ENCODE measurements at regions of chr11 and their contacts with region 1.

Region 1: GRCh38 chr11:61967116-61967923 is at the start of gene FTH1:
- DNase-seq: peak; percentile 94 to 97 (median 94)
- H3K4me3 ChIP-seq: peak within 1 kb of the TSS; percentile 75 to 100 (median 100)
- H3K4me3 Mint-ChIP-seq: peak within 1 kb of the TSS; percentile 95 to 97
- H3K27ac ChIP-seq: peak within 1 kb of the TSS; percentile 95 to 99
- H3K27ac Mint-ChIP-seq: peak within 1 kb of the TSS; percentile 98 to 100 (median 99)
- H3K4me1 ChIP-seq: peaks cover 71 to 72% of the 10 kb centered on the region in 2 donors
- H3K4me1 Mint-ChIP-seq: peaks cover 60% of the 10 kb centered on the region
- H3K27me3 ChIP-seq: no peaks in the 10 kb centered on the region
- H3K27me3 Mint-ChIP-seq: peaks cover 0 to 49% (median 0%) of the 10 kb centered on the region in 3 donors
- CTCF ChIP-seq: no peak
- polyA plus RNA-seq, gene FTH1: 8,968 to 15,394 (median 11,239) TPM

Region 2: DNA sequence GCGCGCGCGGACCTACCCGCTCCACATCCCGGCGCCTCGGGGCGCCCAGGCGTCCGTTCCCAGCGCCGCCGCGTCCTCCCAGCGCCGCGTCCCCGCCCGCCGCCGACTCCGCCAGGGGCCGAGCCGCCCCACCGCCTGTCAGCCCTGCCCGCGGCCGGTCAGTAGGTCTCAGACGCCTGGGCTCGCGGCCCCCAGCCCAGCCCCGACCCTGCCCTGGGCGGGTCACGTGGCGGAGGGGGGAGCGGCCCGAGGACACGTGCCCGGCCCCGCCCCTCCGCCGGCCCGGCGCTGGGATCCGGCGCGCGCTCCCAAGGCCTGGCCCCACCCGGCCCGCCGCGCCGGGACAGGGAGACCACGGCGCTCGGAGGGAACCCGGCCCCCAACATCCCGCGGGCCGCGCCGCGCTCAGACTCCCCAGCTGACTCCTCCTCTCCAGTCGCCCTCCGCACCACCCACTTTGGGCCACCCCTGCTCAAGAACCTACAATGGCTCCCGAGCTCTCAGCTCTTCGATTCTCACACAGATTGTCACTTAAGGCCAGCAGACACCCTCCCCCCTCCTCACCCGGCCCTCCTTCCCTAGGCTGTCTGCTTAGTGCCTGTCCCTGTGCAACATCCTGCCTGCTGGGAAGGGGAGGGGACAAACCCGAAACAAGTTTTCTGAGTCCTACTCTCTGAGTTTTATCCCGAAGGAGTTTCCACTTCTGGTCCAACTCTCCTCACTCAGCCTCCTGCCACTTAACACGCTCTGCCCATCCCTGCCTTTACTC is 49.8 kb before region 1 on chr11 and contains the start of gene RAB3IL1:
- intact Hi-C with region 1: no loop called
- DNase-seq: no peak
- H3K4me3 ChIP-seq: peak within 1 kb of the TSS in 1 of 3 experiments; percentile 61
- H3K4me3 Mint-ChIP-seq: peak within 1 kb of the TSS; percentile 77 to 92
- H3K27ac ChIP-seq: no peak within 1 kb of the TSS
- H3K27ac Mint-ChIP-seq: peak within 1 kb of the TSS in 2 of 7 donors; percentile 18 to 76
- H3K4me1 ChIP-seq: peaks cover 47 to 48% of the 10 kb centered on the region in 2 donors
- H3K4me1 Mint-ChIP-seq: peaks cover 42% of the 10 kb centered on the region
- H3K27me3 ChIP-seq: peaks cover 10 to 44% of the 10 kb centered on the region in 2 donors
- H3K27me3 Mint-ChIP-seq: peaks cover 54 to 69% (median 57%) of the 10 kb centered on the region in 3 donors
- CTCF ChIP-seq: no peak
- polyA plus RNA-seq, gene RAB3IL1: 0.13 TPM in 1 of 3 donors, not detected in the others

Region 3: GRCh38 chr11:61954851-61955421 is 12.4 kb before region 1 on chr11:
- intact Hi-C with region 1: loop called in 1 of 2 experiments (anchors 1 kb)
- DNase-seq: peak; percentile 94 to 98 (median 97)
- H3K4me3 ChIP-seq: peak overlapping the region; percentile 48 to 77 (median 70)
- H3K4me3 Mint-ChIP-seq: peak overlapping the region; percentile 82 to 85
- H3K27ac ChIP-seq: peak overlapping the region; percentile 91 to 95
- H3K27ac Mint-ChIP-seq: peak overlapping the region; percentile 91 to 98 (median 96)
- H3K4me1 ChIP-seq: peaks cover 40 to 53% of the 10 kb centered on the region in 2 donors
- H3K4me1 Mint-ChIP-seq: peaks cover 42% of the 10 kb centered on the region
- H3K27me3 ChIP-seq: no peaks in the 10 kb centered on the region
- H3K27me3 Mint-ChIP-seq: peaks cover 0 to 3% (median 1%) of the 10 kb centered on the region in 3 donors
- CTCF ChIP-seq: peak; percentile 26

Region 4: DNA sequence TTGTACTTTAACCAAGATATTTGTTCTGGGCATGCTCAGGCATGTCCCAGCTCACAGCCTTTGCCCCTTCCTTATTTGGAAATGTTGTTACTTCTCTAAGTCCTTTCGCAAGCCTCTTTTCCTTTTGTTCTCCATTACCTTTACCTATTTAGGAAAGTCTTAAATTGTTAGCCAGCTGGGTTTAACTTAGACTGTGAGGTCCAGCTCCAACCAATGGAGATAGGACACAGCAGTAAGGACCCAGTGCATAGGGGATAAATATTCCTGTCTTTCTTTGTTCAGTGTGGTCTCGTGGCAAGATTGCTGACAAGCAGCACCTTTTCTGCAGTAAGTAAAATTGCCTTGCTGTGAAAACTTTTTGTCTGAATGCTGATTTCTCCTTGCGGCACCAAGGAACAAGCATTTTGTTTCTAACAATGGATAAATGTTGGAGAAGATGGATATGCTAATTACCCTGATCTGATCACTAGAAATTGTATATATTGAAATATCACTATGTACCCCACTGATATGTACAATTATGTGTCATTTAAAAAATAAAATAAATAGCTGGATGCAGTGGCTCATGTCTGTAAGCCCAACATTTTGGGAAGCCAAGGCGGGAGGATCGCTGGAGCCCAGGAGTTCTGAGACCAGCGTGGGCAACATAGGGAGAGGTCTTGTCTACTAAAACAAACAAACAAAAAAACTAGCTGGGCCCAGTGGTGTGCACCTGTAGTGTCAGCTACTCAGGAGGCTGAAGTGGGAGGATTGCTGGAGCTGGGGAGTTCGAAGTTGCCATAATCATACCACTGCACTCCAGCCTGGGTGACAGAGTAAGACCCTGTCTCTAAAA is 32.0 kb after region 1 on chr11:
- intact Hi-C with region 1: no loop called
- DNase-seq: no peak
- H3K4me3 ChIP-seq: no peak overlapping the region
- H3K4me3 Mint-ChIP-seq: no peak overlapping the region
- H3K27ac ChIP-seq: no peak overlapping the region
- H3K27ac Mint-ChIP-seq: no peak overlapping the region
- H3K4me1 ChIP-seq: peaks cover 3 to 10% of the 10 kb centered on the region in 2 donors
- H3K4me1 Mint-ChIP-seq: peaks cover 8% of the 10 kb centered on the region
- H3K27me3 ChIP-seq: no peaks in the 10 kb centered on the region
- H3K27me3 Mint-ChIP-seq: peaks cover 0 to 9% (median 3%) of the 10 kb centered on the region in 3 donors
- CTCF ChIP-seq: no peak

Region 5: GRCh38 chr11:62025487-62026105 is 58.3 kb after region 1 on chr11:
- intact Hi-C with region 1: loop called (anchors 1 kb)
- DNase-seq: peak; percentile 99 to 100 (median 100)
- H3K4me3 ChIP-seq: peak overlapping the region in 2 of 3 experiments; percentile 25 to 34
- H3K4me3 Mint-ChIP-seq: peak overlapping the region; percentile 69 to 76
- H3K27ac ChIP-seq: peak overlapping the region; percentile 97 to 99
- H3K27ac Mint-ChIP-seq: peak overlapping the region; percentile 98 to 100 (median 99)
- H3K4me1 ChIP-seq: peaks cover 31% of the 10 kb centered on the region in 2 donors
- H3K4me1 Mint-ChIP-seq: peaks cover 32% of the 10 kb centered on the region
- H3K27me3 ChIP-seq: no peaks in the 10 kb centered on the region
- H3K27me3 Mint-ChIP-seq: peaks cover 2 to 6% (median 3%) of the 10 kb centered on the region in 3 donors
- CTCF ChIP-seq: no peak

Region 6: DNA sequence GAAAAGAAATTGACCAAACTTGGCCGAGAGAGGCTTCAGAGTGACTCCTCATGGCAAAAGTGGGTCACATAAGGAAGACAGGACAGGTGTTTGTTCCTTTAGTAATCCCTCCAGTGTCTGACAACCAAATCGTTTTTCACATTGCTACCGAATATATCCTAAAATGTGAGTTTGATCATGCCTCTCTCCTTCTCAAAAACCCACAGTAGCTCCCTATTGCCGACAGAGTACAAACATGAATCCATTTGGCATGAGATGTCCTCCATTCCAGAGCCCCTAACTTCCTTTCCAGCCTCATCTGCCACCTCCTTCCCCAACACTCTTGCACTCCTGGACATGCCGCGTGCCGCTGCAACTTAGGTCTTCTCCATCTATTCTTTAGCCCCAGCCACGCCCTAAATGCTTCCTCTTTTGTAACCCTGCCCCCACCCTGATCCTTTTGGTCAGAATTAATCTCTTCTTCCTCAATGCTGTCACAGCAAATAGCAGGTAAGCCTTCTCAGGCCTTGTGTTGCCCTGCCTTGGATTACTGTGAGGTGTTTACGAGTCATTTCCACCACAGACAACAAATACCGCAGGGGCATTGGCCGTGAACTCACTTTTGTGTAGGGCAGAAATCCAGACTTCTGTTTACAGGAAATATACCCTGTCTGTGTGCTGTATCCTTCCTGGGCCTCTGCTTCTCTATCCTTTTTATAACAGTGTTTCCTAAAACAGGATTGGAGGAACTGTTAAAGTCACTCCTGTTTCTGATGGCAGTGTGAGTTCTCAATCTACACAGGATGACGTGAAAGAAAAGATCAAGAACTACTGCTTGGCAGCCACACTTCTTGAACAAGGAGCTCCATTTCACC is 66.1 kb after region 1 on chr11:
- intact Hi-C with region 1: loop called in 1 of 2 experiments (anchors 2 kb)
- DNase-seq: peak; percentile 90 to 92 (median 91)
- H3K4me3 ChIP-seq: peak overlapping the region in 1 of 3 experiments; percentile 15
- H3K4me3 Mint-ChIP-seq: peak overlapping the region; percentile 68 to 70
- H3K27ac ChIP-seq: peak overlapping the region; percentile 82 to 94
- H3K27ac Mint-ChIP-seq: peak overlapping the region; percentile 85 to 98 (median 97)
- H3K4me1 ChIP-seq: peaks cover 27 to 34% of the 10 kb centered on the region in 2 donors
- H3K4me1 Mint-ChIP-seq: peaks cover 34% of the 10 kb centered on the region
- H3K27me3 ChIP-seq: no peaks in the 10 kb centered on the region
- H3K27me3 Mint-ChIP-seq: peaks cover 4 to 17% (median 6%) of the 10 kb centered on the region in 3 donors
- CTCF ChIP-seq: no peak

Region 7: DNA sequence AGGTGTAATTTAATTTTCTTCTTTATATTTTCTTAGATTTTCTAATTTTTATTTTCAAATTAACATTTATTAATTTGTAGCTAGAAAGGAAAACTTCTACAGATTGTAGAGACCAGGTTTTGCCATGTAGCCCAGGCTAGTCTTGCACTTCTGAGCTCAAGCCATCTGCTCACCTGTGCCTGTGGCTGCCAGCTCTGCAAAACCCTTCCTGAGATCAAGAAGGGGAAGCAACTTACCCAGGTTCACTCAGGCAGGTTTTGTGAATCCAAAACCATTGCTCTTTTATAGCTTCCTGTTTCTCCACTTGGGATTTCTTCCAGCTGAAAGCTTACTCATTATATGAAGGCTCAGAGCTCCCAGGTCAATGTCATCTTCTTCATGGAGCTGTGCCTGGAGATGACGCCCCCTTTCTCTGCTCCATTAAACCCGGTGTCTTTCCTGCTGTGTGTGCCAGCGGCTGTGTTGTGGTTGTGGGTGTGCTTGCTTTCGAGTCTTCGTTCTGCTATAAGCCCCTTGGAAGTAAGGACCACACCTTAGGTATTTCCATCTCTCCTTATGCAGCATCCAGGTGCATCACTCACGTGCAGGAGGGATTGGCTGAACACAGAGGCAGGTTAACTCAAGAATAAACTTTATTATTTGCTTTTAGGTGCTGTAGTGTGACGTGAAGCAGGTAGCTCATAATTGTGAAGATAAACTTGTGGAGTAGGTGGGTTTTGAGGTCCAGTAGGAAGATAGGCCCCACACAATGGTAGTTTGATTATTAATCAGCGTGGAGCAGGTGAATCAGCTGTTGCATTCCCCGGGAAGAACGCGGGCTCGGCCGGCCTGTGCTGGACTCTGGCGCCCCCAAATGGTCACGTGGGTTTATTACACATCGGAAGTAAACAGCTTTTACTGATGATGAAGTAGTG is 114.3 kb after region 1 on chr11:
- intact Hi-C with region 1: loop called in 1 of 2 experiments (anchors 5 kb)
- DNase-seq: peak; percentile 71 to 78 (median 72)
- H3K4me3 ChIP-seq: peak overlapping the region in 2 of 3 experiments; percentile 4 to 52
- H3K4me3 Mint-ChIP-seq: peak overlapping the region; percentile 64 to 76
- H3K27ac ChIP-seq: no peak overlapping the region
- H3K27ac Mint-ChIP-seq: peak overlapping the region in 5 of 7 donors; percentile 62 to 86 (median 79)
- H3K4me1 ChIP-seq: peaks cover 7 to 8% of the 10 kb centered on the region in 2 donors
- H3K4me1 Mint-ChIP-seq: peaks cover 15% of the 10 kb centered on the region
- H3K27me3 ChIP-seq: no peaks in the 10 kb centered on the region
- H3K27me3 Mint-ChIP-seq: peaks cover 3 to 8% (median 5%) of the 10 kb centered on the region in 3 donors
- CTCF ChIP-seq: peak; percentile 94

Region 8: GRCh38 chr11:62542750-62543567 is 575.6 kb after region 1 on chr11:
- intact Hi-C with region 1: loop called in 1 of 2 experiments (anchors 5 kb)
- DNase-seq: peak; percentile 88 to 97 (median 88)
- H3K4me3 ChIP-seq: peak overlapping the region; percentile 83 to 96 (median 87)
- H3K4me3 Mint-ChIP-seq: peak overlapping the region; percentile 96 to 98
- H3K27ac ChIP-seq: peak overlapping the region; percentile 82 to 99
- H3K27ac Mint-ChIP-seq: peak overlapping the region; percentile 93 to 100 (median 96)
- H3K4me1 ChIP-seq: peaks cover 79 to 80% of the 10 kb centered on the region in 2 donors
- H3K4me1 Mint-ChIP-seq: peaks cover 74% of the 10 kb centered on the region
- H3K27me3 ChIP-seq: no peaks in the 10 kb centered on the region
- H3K27me3 Mint-ChIP-seq: peaks cover 0 to 13% (median 4%) of the 10 kb centered on the region in 3 donors
- CTCF ChIP-seq: peak; percentile 100

Region 9: DNA sequence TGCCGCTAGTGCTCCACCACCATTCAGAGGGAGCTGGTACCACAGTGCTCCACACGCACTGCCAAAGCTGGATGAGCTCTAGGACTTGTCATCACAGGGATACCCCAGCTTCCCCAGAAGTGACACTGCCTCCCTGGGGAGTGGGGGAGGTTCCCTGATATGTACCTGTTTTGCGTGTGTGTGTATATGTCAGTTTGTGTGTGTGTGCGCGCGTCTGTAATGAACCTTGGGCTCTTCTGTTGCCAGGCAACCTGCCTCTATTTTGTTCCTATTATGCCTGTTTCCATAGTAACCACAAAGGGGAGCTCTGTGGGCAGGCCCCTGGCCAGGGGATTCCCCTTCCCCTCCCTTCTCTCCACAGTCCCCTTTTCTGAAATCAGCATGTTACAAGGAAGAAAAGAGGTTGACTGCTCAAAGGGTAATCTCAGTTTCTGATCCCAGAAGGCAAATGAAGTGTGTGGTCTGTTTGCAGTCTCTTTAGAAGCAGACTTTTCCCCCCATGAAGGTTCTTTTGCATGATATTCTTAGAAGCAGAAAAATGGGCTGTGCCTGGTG is 584.5 kb after region 1 on chr11:
- intact Hi-C with region 1: loop called in 1 of 2 experiments (anchors 5 kb)
- DNase-seq: peak; percentile 98 to 99 (median 99)
- H3K4me3 ChIP-seq: no peak overlapping the region
- H3K4me3 Mint-ChIP-seq: peak overlapping the region; percentile 70 to 84
- H3K27ac ChIP-seq: peak overlapping the region; percentile 95 to 100
- H3K27ac Mint-ChIP-seq: peak overlapping the region; percentile 100
- H3K4me1 ChIP-seq: peaks cover 74 to 75% of the 10 kb centered on the region in 2 donors
- H3K4me1 Mint-ChIP-seq: peaks cover 81% of the 10 kb centered on the region
- H3K27me3 ChIP-seq: no peaks in the 10 kb centered on the region
- H3K27me3 Mint-ChIP-seq: peaks cover 2 to 31% (median 10%) of the 10 kb centered on the region in 3 donors
- CTCF ChIP-seq: no peak

Measured in CD14-positive monocyte (primary cell).